Activated CD4-positive, alpha-beta memory T cell treated with anti-CD3 and anti-CD28 coated beads for 36 hours (primary cell): ENCODE measurements at regions of chr2 and their contacts with region 1.

Region 1: GRCh38 chr2:197255543-197255942 is 55.0 kb downstream of the ANKRD44 start:
- DNase-seq: peak; percentile 88
- H3K4me3 Mint-ChIP-seq: peak overlapping the region; percentile 85
- H3K27ac Mint-ChIP-seq: peak overlapping the region; percentile 100
- H3K4me1 Mint-ChIP-seq: peaks cover 82% of the 10 kb centered on the region
- H3K27me3 Mint-ChIP-seq: no peaks in the 10 kb centered on the region

Region 2: DNA sequence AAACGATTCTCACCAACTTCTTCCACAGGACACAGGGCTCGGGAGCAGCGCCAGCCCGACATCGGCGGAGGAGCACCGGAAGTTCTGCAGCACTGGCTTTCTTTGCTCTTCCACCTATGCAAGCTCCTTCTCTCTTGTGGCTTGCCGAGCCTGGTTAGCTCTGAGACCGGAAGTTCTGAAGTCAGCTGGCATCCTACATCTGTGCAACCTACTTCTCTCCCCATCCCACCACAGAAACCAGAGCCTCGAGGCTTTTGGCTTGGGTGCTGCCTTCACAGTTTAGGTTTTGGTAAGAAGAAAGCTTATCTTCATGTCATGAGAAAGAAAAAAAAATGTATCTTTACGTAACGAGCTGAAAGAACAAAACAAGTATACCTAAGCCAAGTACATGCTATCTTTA is 56.7 kb before region 1 on chr2:
- CTCF ChIA-PET with region 1: interaction called, 5 read pairs
- POLR2A ChIA-PET with region 1: interaction called, 3 read pairs
- intact Hi-C with region 1: loop called (anchors 2 kb)
- DNase-seq: peak; percentile 95
- H3K4me3 Mint-ChIP-seq: peak overlapping the region; percentile 80
- H3K27ac Mint-ChIP-seq: peak overlapping the region; percentile 93
- H3K4me1 Mint-ChIP-seq: peaks cover 90% of the 10 kb centered on the region
- H3K27me3 Mint-ChIP-seq: no peaks in the 10 kb centered on the region

Region 3: GRCh38 chr2:197216361-197216979 is 39.1 kb before region 1 on chr2:
- CTCF ChIA-PET with region 1: no interaction called
- POLR2A ChIA-PET with region 1: interaction called, 4 read pairs
- intact Hi-C with region 1: loop called (anchors 1 kb)
- DNase-seq: no peak
- H3K4me3 Mint-ChIP-seq: peak overlapping the region; percentile 62
- H3K27ac Mint-ChIP-seq: peak overlapping the region; percentile 94
- H3K4me1 Mint-ChIP-seq: peaks cover 86% of the 10 kb centered on the region
- H3K27me3 Mint-ChIP-seq: no peaks in the 10 kb centered on the region

Region 4: DNA sequence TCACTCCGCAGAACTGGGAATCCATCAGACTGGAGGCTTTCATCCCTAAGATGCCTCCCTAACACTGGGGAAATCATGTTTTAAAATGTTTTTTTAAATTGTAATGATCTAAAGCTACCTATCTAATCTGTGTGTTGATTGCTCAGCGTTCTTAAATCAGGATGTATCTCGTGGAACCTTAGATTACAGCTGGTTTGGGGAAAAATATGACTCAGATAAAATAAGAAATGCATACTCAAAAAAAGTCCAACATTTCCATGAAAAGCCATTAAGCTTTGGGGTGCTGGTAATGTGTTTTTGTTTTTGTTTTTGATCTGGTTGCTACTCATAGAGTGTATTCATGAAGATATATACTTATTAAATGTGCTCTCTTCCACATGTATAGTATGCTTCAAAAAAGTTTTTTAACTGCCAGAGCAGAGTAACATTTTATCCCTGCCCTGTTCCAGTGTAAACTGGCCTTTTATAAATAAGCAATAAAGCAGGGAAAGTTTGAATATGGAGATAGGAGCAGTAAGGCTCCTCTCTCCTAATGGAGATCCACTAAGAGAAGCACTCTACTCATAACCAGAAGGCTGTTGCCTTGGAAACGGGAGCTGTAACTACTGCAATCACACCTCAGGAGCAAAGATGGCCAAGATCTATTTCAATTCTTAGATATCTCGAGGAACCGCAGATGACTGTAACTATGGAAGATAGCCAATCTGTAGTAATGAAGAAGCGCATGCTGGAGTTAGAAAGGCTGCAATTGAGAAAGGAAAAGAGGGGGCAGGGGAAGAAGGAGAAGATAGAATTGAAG is 13.4 kb after region 1 on chr2:
- CTCF ChIA-PET with region 1: interaction called, 3 read pairs
- POLR2A ChIA-PET with region 1: interaction called, 4 read pairs
- intact Hi-C with region 1: loop called (anchors 1 kb)
- DNase-seq: peak; percentile 63
- H3K4me3 Mint-ChIP-seq: no peak overlapping the region
- H3K27ac Mint-ChIP-seq: peak overlapping the region; percentile 74
- H3K4me1 Mint-ChIP-seq: peaks cover 89% of the 10 kb centered on the region
- H3K27me3 Mint-ChIP-seq: no peaks in the 10 kb centered on the region

Region 5: DNA sequence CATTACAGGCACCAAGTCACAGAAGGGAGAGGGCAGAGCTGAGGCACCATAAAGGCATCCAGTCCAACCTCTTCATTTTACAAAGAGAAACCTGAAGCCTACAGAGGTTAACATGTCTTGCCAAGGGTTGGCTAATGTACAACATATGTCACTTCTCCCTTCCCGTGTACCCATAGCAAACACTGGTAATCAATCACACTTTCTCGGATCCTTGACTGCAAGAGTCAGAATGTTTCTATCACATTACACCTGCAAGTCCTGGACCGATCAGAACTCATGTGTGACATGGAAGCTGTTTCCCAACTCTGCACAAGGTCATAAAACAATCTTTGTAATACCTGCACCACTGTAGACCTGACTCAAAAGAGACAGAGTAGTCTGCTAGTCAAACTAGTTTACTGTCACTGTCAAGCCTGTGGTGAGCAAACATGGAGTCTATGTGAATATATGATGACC is 49.0 kb after region 1 on chr2:
- CTCF ChIA-PET with region 1: interaction called, 5 read pairs
- POLR2A ChIA-PET with region 1: interaction called, 33 read pairs
- intact Hi-C with region 1: loop called (anchors 1 kb)
- DNase-seq: peak; percentile 62
- H3K4me3 Mint-ChIP-seq: peak overlapping the region; percentile 95
- H3K27ac Mint-ChIP-seq: peak overlapping the region; percentile 99
- H3K4me1 Mint-ChIP-seq: peaks cover 83% of the 10 kb centered on the region
- H3K27me3 Mint-ChIP-seq: no peaks in the 10 kb centered on the region

Region 6: GRCh38 chr2:197513915-197514314 is 258.4 kb after region 1 on chr2:
- CTCF ChIA-PET with region 1: no interaction called
- POLR2A ChIA-PET with region 1: no interaction called
- intact Hi-C with region 1: no loop called
- DNase-seq: no peak
- H3K4me3 Mint-ChIP-seq: no peak overlapping the region
- H3K27ac Mint-ChIP-seq: no peak overlapping the region
- H3K4me1 Mint-ChIP-seq: peaks cover 17% of the 10 kb centered on the region
- H3K27me3 Mint-ChIP-seq: no peaks in the 10 kb centered on the region